AG04450 (cell line): ENCODE measurements at regions of chr16 and their contacts with region 1.

Region 1: GRCh38 chr16:74998481-74999218 is at the start of gene ZNRF1:
- DNase-seq: peak; percentile 24
- H3K4me3 ChIP-seq: peak within 1 kb of the TSS; percentile 92
- H3K27ac ChIP-seq: peak within 1 kb of the TSS; percentile 11
- H3K27me3 ChIP-seq: no peaks in the 10 kb centered on the region
- CTCF ChIP-seq: peak; percentile 72
- polyA plus RNA-seq, gene ZNRF1: 31.6 and 36.5 TPM in 2 replicates

Region 2: DNA sequence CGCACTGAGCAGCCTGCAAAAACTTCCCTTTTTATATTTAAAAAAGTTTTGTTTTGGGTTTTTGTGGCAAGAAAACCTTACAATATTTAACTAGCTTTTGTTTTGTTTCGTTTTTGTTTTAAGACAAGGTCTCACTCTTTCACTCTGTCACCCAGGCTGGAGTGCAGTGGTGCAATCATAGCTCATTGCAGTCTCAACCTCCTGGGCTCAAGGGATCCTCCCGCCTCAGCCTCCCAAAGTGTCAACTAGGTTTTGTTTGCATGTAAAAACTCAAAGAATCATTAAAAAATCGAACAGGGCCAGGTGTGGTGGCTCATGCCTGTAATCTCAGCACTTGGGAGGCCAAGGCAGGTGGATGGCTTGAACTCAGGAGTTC is 146.2 kb before region 1 on chr16:
- CTCF ChIA-PET with region 1: no interaction called
- POLR2A ChIA-PET with region 1: no interaction called
- DNase-seq: no peak
- H3K4me3 ChIP-seq: no peak overlapping the region
- H3K27ac ChIP-seq: no peak overlapping the region
- H3K27me3 ChIP-seq: peaks cover 5% of the 10 kb centered on the region
- CTCF ChIP-seq: no peak

Region 3: GRCh38 chr16:74984535-74985296 is 13.9 kb before region 1 on chr16 and contains the start of gene WDR59:
- CTCF ChIA-PET with region 1: interaction called, 20 read pairs
- POLR2A ChIA-PET with region 1: no interaction called
- DNase-seq: peak; percentile 96
- H3K4me3 ChIP-seq: peak within 1 kb of the TSS; percentile 97
- H3K27ac ChIP-seq: peak within 1 kb of the TSS; percentile 52
- H3K27me3 ChIP-seq: no peaks in the 10 kb centered on the region
- CTCF ChIP-seq: no peak
- polyA plus RNA-seq, gene WDR59: 45.6 and 48.1 TPM in 2 replicates

Region 4: DNA sequence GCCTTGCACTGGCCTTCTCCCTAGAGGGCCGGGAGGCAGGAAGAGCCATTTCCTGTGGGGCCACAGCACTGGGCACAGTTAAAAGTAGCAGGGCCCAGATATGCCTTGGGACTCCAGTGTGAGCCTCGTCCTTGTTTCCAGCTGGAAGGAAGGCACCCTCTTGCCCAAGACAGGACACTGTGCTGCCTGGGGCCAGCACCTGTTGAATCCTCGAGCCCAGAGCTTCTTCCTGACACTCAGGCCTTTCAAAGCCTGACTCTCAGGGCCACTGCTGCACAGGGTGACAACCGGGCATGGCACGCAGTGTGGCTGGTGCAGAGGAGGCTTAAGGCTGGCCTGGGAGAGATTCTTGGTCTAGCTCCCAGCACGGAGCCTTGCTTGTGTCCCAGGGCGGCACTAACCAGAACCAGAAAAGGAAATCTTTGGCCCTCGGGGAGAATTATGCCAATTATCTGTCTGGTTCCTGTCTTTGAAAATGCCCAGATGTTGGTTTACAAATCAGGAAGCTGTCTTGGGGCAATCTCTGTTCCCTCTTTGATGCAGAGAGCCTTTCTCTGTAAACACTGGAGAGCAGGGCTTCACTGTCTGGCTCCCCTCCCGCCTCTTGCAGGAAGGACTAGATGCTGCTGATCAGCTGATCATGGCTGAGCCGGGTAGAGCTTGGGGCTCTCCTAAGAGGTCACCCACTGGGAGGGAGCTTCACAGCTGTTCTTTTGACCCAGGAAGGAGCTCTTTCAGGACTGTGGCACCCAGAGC is 106.8 kb after region 1 on chr16:
- CTCF ChIA-PET with region 1: interaction called, 144 read pairs
- POLR2A ChIA-PET with region 1: interaction called, 16 read pairs
- DNase-seq: peak; percentile 24
- H3K4me3 ChIP-seq: no peak overlapping the region
- H3K27ac ChIP-seq: peak overlapping the region; percentile 47
- H3K27me3 ChIP-seq: no peaks in the 10 kb centered on the region
- CTCF ChIP-seq: no peak

Region 5: GRCh38 chr16:75118943-75119539 is 120.4 kb after region 1 on chr16:
- CTCF ChIA-PET with region 1: interaction called, 144 read pairs
- POLR2A ChIA-PET with region 1: no interaction called
- DNase-seq: no peak
- H3K4me3 ChIP-seq: no peak overlapping the region
- H3K27ac ChIP-seq: no peak overlapping the region
- H3K27me3 ChIP-seq: no peaks in the 10 kb centered on the region
- CTCF ChIP-seq: no peak

Region 6: GRCh38 chr16:75234856-75235696 is 236.4 kb after region 1 on chr16:
- CTCF ChIA-PET with region 1: no interaction called
- POLR2A ChIA-PET with region 1: no interaction called
- DNase-seq: no peak
- H3K4me3 ChIP-seq: no peak overlapping the region
- H3K27ac ChIP-seq: peak overlapping the region; percentile 31
- H3K27me3 ChIP-seq: no peaks in the 10 kb centered on the region
- CTCF ChIP-seq: no peak